AG04449 (cell line): ENCODE measurements at regions of chr11 and their contacts with region 1.

Region 1: DNA sequence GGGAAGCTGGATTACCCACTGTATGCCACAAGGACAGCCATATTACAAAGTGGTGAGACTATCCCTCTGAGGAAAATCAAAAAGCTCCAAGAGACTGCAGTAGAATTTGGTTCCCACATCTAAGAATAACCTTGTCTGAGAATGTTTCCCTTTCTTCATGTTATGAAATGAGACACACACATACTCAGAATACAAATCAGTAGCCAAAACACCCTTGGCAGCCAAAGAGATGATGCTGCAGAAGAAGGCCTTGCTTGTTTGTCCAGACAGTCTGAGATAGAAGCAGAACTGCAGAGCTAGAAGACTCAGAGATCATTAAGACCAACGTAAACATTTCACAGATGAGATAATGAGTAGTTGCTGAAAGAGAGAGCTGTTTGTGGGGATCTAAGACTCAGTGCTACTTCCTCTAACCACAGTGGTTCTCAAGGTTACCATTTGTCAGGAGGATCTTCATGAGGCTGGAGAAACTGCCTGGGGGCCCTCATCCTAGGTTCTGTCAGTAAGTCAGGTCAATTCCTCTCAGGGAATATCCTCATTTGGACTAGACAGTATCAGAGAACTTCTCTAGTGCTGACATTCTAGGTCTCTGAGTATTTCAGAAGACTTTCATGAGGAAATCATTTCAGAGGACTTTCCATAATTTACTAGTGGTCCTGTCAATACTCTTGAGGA is 38.9 kb downstream of the RELT start:
- DNase-seq: peak; percentile 95
- H3K4me3 ChIP-seq: no peak overlapping the region
- CTCF ChIP-seq: no peak

Region 2: DNA sequence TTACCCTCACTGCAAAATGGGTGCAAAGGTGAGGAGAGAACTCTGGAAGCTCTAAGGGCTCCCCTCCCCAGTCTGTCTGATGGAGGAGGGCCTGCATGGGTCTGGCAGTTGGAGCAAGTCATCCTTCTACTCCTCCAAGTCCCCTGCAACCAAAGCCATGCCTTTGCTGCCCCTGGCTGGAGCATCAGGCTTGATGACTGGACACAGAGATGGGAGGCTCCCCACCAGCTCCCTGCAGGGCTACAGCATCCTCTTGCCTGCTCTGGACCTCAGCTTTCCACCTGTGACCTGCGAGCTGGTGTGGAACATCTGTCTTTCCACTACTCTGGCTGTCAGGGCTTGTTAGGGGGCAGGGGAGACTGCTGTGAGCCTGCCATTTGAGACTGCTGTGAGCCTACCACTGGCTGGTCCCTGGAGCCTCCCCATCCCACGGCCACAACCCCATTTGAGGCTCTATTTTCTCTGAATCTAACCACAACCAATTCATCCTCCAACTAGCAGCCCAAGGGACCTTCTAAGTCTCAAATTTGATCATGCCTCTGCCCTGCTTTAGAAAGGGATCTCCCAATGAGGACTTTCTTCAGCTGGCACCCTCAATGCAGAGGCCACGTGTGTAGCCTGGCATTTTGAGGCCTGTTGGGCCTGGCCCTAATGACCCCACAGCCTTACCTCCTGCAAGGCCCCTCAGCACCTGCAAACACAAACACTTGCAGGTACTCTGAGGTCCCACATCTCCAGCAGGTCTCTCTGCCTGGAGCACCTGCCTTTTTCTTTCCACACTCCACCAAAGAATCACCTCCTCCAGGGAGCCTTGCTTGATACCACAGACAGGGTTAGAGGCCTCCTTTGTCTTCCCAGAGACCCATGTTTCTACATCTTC is 133.1 kb before region 1 on chr11:
- CTCF ChIA-PET with region 1: no interaction called
- POLR2A ChIA-PET with region 1: no interaction called
- DNase-seq: no peak
- H3K4me3 ChIP-seq: no peak overlapping the region
- CTCF ChIP-seq: no peak

Region 3: GRCh38 chr11:73404048-73404447 is 11.1 kb before region 1 on chr11:
- CTCF ChIA-PET with region 1: interaction called, 50 read pairs
- POLR2A ChIA-PET with region 1: interaction called, 3 read pairs
- DNase-seq: no peak
- H3K4me3 ChIP-seq: no peak overlapping the region
- CTCF ChIP-seq: peak; percentile 80

Region 4: DNA sequence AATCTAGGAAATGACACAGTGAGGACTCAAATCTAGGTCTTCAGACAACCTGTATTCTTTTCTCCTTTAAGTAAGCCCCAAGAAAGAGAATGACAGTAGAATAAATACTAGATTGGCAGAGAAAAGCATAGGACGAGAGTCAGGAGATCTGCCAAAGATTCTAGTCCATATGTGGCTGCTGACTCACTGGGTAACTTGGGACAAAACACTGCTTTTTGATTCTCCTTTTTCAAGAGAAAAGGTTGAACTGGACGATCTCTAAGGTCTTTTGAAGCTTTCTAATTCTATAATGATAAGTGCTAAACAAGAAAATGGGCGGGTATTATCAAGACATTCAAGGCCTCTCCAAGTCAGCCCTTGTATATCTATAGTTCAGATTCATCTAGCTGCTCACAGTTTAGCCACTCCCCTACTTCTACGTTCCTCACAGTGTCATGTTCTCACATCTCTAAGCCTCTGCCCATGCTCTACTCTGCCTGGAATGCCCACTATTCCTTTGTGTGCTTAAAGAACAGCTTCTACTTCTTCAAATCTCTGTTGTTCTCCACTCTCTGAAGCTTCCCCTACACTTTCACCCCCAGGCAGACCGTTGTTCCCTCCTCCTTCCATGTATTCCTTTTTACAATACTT is 14.1 kb after region 1 on chr11:
- CTCF ChIA-PET with region 1: interaction called, 16 read pairs
- POLR2A ChIA-PET with region 1: interaction called, 9 read pairs
- DNase-seq: no peak
- H3K4me3 ChIP-seq: no peak overlapping the region
- CTCF ChIP-seq: no peak

Region 5: DNA sequence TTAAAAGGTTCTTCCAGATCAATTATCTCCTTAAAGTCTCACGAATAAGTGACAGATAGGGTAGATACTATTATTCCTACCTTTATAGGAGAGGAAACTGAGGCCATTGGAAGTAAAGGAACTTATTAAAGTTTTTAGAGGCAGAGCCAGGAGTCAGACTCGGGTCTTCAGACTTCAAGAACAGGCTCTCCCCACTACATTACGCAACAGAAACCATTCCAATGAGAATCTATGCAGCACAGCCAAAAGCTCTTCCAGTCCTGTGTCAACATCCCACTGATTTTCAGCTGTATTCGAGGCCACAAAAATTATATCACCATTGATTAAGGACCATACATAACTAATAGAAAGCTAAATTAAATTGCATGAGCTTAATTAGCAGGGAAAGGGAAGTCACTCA is 38.4 kb after region 1 on chr11:
- CTCF ChIA-PET with region 1: no interaction called
- POLR2A ChIA-PET with region 1: no interaction called
- DNase-seq: no peak
- H3K4me3 ChIP-seq: no peak overlapping the region
- CTCF ChIP-seq: no peak